ENCODE measurements at regions of chr4 and their contacts with region 1.

Region 1: DNA sequence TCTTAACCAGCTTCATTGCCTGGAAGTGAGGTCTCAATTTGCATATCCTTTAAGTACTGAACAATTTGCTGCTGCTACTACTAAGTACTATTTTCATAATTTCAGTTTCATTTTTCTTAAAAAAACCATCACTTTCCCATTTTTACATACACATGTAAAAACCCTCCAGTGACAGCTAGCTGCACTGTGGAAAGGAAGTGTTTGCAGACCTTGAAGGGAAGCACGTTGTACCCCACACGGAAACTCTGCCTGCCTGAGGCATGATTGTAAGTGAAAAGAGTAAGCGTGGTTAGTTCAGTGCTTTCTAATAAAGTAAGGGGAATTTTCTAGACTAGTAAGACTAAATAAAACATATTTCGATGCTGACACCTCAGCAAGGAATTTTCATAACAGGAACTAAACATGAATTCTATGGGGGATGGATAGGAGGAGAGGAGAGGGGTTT is 103.6 kb downstream of the RAPGEF2 start:
- DNase-seq: no peak
- ATAC-seq: no peak
- H3K4me3 ChIP-seq: no peak overlapping the region
- H3K27ac ChIP-seq: no peak overlapping the region
- H3K4me1 ChIP-seq: peaks cover 12% of the 10 kb centered on the region
- H3K27me3 ChIP-seq: no peaks in the 10 kb centered on the region
- CTCF ChIP-seq: no peak

Region 2: DNA sequence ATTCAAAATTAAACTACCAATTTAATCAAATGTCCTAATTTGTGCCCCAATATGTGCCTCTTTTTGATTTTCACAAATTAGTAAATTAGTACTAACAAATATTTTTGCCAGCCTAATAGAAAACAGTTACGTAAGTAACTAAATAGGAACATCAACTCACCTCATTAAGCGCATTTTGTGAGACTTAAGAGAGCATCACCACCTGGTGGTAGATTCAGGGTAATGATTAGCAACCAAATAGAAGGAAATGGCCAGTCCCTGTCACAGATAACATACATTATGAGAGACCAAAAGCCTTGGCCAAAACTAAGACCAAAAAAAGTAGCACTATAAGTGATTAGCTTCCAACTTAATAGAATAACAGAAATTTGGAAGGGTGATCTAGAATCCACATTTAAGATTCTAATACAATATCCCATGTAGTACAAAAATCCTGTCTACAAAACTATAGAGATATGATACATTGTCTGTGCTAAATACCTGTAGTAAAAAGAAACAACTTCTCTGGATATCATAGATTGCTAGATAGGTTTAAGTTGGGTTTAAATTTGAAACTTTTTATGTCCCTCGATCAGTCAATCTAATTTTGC is 581.5 kb before region 1 on chr4:
- intact Hi-C with region 1: no loop called
- DNase-seq: no peak
- ATAC-seq: peak; percentile 86
- H3K4me3 ChIP-seq: no peak overlapping the region
- H3K27ac ChIP-seq: no peak overlapping the region
- H3K4me1 ChIP-seq: no peaks in the 10 kb centered on the region
- H3K27me3 ChIP-seq: no peaks in the 10 kb centered on the region
- CTCF ChIP-seq: peak; percentile 81

Region 3: GRCh38 chr4:158729716-158730559 is 476.5 kb before region 1 on chr4:
- intact Hi-C with region 1: loop called (anchors 10 kb)
- DNase-seq: no peak
- ATAC-seq: peak; percentile 98
- H3K4me3 ChIP-seq: no peak overlapping the region
- H3K27ac ChIP-seq: no peak overlapping the region
- H3K4me1 ChIP-seq: no peaks in the 10 kb centered on the region
- H3K27me3 ChIP-seq: no peaks in the 10 kb centered on the region
- CTCF ChIP-seq: peak; percentile 87

Region 4: DNA sequence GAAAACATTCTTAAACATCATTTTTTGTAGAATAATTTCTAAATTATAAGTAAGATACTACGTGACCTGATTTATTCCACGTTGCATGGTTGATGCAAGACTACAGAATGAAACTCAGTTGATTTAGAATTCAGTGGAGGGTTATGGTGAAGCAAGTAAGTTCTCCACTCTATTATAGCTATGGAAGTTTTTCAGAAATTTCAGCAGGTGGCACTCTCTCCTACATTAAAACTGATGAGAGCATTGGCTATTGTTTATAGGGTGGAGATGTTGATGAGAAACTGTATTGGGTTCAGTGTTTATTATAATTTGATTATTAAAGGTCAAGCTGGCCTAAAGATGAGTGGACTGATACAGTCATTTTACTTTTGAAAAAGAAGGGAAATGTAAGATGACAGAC is 349.6 kb before region 1 on chr4:
- intact Hi-C with region 1: loop called (anchors 10 kb)
- DNase-seq: no peak
- ATAC-seq: peak; percentile 72
- H3K4me3 ChIP-seq: no peak overlapping the region
- H3K27ac ChIP-seq: no peak overlapping the region
- H3K4me1 ChIP-seq: no peaks in the 10 kb centered on the region
- H3K27me3 ChIP-seq: no peaks in the 10 kb centered on the region
- CTCF ChIP-seq: peak; percentile 57

Measured in upper lobe of right lung (tissue), 1 donor.